ENCODE measurements at regions of chr17 and their contacts with region 1.

Region 1: DNA sequence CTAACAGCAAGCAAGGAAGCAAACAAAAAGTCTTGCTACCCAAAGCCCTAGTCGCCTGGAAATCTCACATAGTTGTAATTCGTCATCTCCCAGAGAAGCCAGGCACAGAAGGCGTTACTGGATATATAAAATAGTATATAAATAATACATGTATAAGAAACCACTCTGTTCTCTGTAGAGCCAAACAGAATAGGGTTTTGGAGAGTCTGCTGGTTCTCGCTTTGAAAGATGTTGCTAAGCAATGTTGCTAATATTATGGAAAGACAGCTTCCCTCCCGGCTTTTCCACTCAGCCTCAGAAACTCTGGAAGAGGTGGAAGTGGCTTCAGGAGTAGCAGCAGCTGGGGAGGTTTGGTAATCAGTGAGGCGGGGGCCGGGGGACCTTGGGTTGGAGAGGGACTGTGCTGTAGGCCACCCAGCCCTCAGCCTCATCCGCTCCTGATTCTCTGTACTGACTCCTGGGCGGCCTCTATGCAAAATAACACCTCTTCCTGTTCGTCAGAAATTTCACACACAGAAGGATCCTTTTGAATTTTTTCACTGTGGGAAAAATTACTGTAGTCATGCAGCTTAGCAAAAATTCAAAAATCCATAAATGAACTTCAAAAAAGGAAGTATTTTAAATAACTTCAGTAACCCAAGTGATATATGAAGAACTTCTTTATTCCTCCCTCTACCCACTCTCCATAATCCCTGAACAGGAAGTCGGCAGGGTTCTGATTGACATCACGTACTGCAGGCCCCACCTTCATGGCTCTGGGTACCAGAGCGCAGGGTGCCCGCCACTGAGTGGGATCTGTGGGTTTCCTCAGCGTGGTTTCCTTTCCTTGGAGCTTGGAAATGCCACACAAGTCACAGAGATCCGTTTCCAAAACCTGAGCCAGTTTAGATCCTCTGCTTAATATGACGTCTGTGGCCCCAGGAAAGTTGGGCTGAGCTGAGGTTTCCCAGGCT is 51.4 kb downstream of the RAP1GAP2 start:
- DNase-seq: peak; percentile 60
- H3K4me3 ChIP-seq: peak overlapping the region; percentile 29
- H3K27ac ChIP-seq: peak overlapping the region; percentile 50
- H3K4me1 ChIP-seq: peaks cover 49% of the 10 kb centered on the region
- CTCF ChIP-seq: no peak

Region 2: DNA sequence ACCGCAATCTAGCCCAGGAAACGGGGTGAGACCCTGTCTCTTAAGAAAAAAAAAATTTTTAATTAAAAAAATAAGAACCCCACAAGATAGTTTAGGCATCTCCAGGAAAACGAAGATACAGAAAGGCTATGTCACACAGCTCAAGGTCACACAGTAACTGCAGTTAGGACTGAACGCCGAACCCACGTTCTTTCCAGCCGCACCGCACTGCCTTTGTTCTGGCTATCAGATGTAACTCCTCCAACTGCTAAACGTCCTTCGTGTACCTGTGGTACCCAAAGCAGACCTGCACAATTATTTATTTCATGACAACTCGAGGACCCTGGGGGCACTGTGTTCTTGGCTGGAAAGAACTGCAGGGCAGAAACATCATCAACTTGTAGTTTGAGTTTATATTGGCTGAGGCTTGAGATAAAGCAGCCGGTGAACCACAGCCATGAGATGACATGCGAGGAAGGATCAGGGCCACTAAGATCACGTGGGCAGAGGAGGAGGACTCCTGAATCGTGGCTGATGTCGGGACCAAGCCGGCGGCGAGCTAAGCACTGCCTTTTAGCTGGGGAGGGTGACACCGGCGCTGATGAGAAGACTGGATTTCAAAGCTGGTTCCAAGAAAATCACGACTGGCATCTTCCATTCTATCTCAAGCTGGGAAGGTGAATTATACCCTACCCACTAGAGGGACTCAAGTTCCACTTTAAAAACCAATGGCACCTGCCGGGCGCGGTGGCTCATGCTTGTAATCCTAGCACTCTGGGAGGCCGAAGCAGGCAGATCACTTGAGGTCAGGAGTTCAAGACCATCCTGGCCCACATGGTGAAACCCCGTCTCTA is 426.1 kb before region 1 on chr17:
- CTCF ChIA-PET with region 1: no interaction called
- POLR2A ChIA-PET with region 1: no interaction called
- intact Hi-C with region 1: no loop called
- DNase-seq: peak; percentile 16
- H3K4me3 ChIP-seq: no peak overlapping the region
- H3K27ac ChIP-seq: no peak overlapping the region
- H3K4me1 ChIP-seq: no peaks in the 10 kb centered on the region
- CTCF ChIP-seq: peak; percentile 41; the same call in 1 of the 2 replicates

Region 3: GRCh38 chr17:2929881-2930533 is 82.3 kb after region 1 on chr17:
- CTCF ChIA-PET with region 1: no interaction called
- POLR2A ChIA-PET with region 1: interaction called, 7 read pairs
- intact Hi-C with region 1: loop called (anchors 2 kb)
- DNase-seq: peak; percentile 70
- H3K4me3 ChIP-seq: no peak overlapping the region
- H3K27ac ChIP-seq: peak overlapping the region; percentile 89
- H3K4me1 ChIP-seq: peaks cover 42% of the 10 kb centered on the region
- CTCF ChIP-seq: peak; percentile 90

Measured in OCI-LY7 (cell line).